ENCODE measurements at regions of chr1 and their contacts with region 1.

Region 1: DNA sequence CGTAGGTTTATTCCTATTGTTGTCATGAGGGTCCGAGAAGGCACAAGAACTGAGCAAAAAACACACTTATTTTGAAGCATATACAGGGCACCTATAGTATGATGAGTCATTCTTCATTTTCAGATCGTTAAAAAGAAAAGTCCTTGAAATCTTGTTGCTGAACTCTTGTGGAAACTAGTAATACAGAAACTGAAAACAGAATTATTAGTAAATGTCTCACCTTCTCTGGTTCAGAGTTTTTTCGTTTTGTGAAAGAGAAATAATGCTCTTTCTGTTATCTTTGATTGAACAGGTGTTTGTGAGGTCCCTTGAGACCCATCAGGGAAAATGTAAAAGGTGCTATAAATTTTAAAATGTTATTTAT is 102.0 kb upstream of the COA6 start:
- DNase-seq: peak; percentile 22
- H3K4me3 Mint-ChIP-seq: no peak overlapping the region
- H3K27ac Mint-ChIP-seq: no peak overlapping the region
- H3K4me1 Mint-ChIP-seq: peaks cover 26% of the 10 kb centered on the region
- H3K27me3 Mint-ChIP-seq: peaks cover 28% of the 10 kb centered on the region

Region 2: DNA sequence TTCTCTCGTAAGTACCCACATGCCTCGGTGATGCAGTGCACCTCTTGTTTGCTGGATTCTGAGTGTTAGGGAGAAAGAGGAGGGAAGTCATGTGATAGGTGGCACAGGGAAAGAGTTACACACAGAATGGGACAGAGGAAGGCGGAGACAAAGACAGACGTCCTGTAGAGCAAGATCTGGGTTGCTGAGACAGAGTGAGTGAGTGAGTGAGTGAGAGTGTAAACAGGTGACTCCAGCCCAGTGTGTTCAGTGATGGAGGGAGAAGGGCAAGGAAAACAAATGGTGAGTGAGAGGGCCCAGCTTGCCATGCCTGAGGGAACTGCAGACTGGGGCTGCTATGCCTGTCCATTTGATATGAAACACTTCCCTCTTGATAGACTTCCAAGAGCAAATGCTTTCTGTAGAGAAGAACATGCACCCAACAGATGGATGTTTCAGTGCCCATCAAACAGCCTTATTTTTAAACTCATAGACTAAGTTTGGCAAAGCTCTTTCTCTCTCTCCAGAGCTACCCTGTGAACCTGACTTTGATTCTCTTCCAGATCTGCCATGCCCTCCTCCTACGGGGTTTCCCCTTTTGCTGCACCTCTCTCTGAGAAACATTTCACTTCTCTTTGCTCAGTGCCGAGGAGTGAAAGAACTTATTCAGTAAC is 107.8 kb before region 1 on chr1:
- CTCF ChIA-PET with region 1: no interaction called
- intact Hi-C with region 1: no loop called
- DNase-seq: no peak
- H3K4me3 Mint-ChIP-seq: no peak overlapping the region
- H3K27ac Mint-ChIP-seq: no peak overlapping the region
- H3K4me1 Mint-ChIP-seq: peaks cover 8% of the 10 kb centered on the region
- H3K27me3 Mint-ChIP-seq: peaks cover 9% of the 10 kb centered on the region

Region 3: DNA sequence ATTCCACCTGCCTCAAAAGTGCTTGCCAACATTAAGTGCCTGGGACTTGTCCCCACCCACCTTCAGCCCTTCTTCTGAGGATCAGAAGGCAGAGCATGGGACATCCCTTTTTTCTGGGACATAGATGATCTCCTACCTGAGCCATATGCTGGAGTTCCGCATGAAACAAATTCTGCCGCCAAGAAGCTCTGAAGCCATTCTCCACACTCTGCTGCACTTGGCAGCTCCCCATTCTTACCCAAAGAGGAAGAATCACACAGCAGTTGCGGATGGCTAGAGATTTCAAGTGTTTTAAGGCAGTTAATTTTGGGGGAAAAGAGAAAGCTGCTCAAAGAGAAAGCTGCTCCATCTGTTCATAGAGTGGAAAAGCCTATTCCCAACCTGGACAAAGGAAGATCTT is 95.2 kb before region 1 on chr1:
- CTCF ChIA-PET with region 1: no interaction called
- intact Hi-C with region 1: no loop called
- DNase-seq: no peak
- H3K4me3 Mint-ChIP-seq: no peak overlapping the region
- H3K27ac Mint-ChIP-seq: peak overlapping the region; percentile 48
- H3K4me1 Mint-ChIP-seq: peaks cover 5% of the 10 kb centered on the region
- H3K27me3 Mint-ChIP-seq: peaks cover 5% of the 10 kb centered on the region

Region 4: DNA sequence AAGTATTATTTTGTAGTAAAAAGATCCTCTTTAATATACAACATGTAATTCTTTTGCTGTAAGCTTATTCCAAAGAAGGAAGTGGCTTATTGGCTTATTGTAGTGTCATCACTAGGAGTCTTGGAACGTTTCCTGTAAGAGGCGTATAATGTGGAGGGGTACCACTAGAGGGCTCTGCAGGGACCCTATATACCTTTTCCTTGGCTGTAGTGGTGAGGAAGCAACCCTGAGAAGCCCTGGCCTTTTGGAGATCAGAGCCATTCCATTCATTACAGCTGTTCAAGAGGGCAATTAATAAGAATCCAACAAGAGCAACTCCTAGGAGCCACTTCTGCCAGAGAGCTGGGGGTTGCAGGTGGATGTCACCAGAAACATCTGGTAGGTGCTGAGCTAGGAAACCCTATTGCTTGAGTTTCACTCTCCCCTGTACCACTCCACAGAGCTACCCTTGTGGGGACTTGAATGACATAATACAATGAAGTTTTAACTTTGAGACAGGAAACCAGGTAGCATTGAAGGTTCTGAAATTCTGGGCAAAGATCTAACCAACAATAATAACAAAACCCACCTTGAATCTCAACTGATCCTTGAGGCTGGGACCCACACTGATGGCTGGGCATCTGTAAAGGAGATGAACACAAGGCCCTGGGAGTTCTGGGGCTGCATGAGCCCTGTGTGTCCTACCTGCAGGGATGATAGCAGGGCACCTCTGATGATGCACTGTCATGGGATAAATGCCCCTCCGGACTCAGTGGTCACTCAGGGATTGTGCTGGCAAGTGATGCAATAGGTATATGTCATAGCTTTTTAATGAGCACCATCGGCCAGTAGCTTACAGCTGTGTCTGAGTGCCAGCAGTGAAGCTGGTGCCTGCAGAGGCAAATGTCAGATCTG is 58.2 kb before region 1 on chr1:
- CTCF ChIA-PET with region 1: interaction called, 6 read pairs
- intact Hi-C with region 1: loop called (anchors 5 kb)
- DNase-seq: peak; percentile 56
- H3K4me3 Mint-ChIP-seq: no peak overlapping the region
- H3K27ac Mint-ChIP-seq: no peak overlapping the region
- H3K4me1 Mint-ChIP-seq: peaks cover 12% of the 10 kb centered on the region
- H3K27me3 Mint-ChIP-seq: peaks cover 43% of the 10 kb centered on the region

Region 5: GRCh38 chr1:234244482-234244881 is 26.7 kb before region 1 on chr1:
- CTCF ChIA-PET with region 1: no interaction called
- intact Hi-C with region 1: loop called (anchors 1 kb)
- DNase-seq: no peak
- H3K4me3 Mint-ChIP-seq: no peak overlapping the region
- H3K27ac Mint-ChIP-seq: no peak overlapping the region
- H3K4me1 Mint-ChIP-seq: peaks cover 13% of the 10 kb centered on the region
- H3K27me3 Mint-ChIP-seq: peaks cover 22% of the 10 kb centered on the region

Region 6: GRCh38 chr1:234260578-234260977 is 10.6 kb before region 1 on chr1:
- CTCF ChIA-PET with region 1: no interaction called
- intact Hi-C with region 1: loop called (anchors 1 kb)
- DNase-seq: peak; percentile 69
- H3K4me3 Mint-ChIP-seq: no peak overlapping the region
- H3K27ac Mint-ChIP-seq: no peak overlapping the region
- H3K4me1 Mint-ChIP-seq: peaks cover 13% of the 10 kb centered on the region
- H3K27me3 Mint-ChIP-seq: peaks cover 36% of the 10 kb centered on the region

Measured in activated naive CD4-positive, alpha-beta T cell treated with anti-CD3 and anti-CD28 coated beads for 36 hours (primary cell).